CD14-positive monocyte (primary cell): ENCODE measurements at regions of chr14 and their contacts with region 1.

Region 1: DNA sequence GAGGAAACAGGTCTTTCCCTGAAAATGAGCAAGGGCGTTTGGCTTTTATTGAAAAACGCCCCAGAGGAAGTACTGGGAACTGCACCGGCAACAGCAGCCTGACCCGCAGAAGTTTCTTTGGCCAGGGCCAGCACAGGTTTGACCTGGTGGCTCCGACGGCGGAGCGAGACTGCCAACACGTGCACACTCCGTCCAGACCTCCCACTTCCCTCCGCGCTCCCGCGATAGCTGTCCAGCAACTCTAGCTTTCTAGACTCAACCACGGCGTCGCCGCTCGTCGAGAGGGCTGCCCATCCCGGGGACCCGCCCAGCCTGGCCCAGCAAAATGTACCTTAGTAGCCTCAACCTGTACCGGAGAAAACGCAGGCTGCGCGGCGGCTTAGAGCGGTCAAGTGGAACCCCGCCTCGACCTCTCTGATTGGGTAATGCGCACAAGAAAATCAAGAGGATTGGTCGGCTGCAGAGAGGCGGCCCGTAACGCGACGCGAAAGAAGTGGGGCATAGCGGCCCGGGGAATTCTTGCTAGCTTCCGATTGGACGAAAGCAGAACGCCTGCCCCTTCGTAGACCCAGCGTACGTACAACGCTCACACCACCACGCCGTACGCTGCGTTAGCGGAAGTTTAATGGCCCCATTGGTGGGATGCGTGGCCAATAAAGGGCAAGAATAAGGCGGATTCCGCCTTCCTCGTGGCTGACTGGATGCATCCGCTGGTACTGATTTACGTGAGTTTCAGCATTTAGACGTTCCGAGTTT is at the start of gene WDR89:
- DNase-seq: peak; percentile 99
- H3K4me3 ChIP-seq: peak within 1 kb of the TSS; percentile 58 to 88 (median 70)
- H3K4me3 Mint-ChIP-seq: peak within 1 kb of the TSS; percentile 96 to 99
- H3K27ac ChIP-seq: peak within 1 kb of the TSS; percentile 95 to 97
- H3K27ac Mint-ChIP-seq: peak within 1 kb of the TSS; percentile 99 to 100 (median 100)
- H3K4me1 ChIP-seq: peaks cover 12 to 23% of the 10 kb centered on the region in 2 donors
- H3K4me1 Mint-ChIP-seq: peaks cover 5% of the 10 kb centered on the region
- H3K27me3 ChIP-seq: no peaks in the 10 kb centered on the region
- H3K27me3 Mint-ChIP-seq: peaks cover 0 to 2% (median 0%) of the 10 kb centered on the region in 3 donors
- CTCF ChIP-seq: peak; percentile 81
- polyA plus RNA-seq, gene WDR89: 2.1 to 3.6 (median 2.2) TPM

Region 2: GRCh38 chr14:63342371-63342770 is 299.3 kb before region 1 on chr14:
- intact Hi-C with region 1: no loop called
- DNase-seq: no peak
- H3K4me3 ChIP-seq: no peak overlapping the region
- H3K4me3 Mint-ChIP-seq: no peak overlapping the region
- H3K27ac ChIP-seq: no peak overlapping the region
- H3K27ac Mint-ChIP-seq: no peak overlapping the region
- H3K4me1 ChIP-seq: no peaks in the 10 kb centered on the region
- H3K4me1 Mint-ChIP-seq: no peaks in the 10 kb centered on the region
- H3K27me3 ChIP-seq: no peaks in the 10 kb centered on the region
- H3K27me3 Mint-ChIP-seq: peaks cover 2 to 4% (median 3%) of the 10 kb centered on the region in 3 donors
- CTCF ChIP-seq: no peak

Region 3: DNA sequence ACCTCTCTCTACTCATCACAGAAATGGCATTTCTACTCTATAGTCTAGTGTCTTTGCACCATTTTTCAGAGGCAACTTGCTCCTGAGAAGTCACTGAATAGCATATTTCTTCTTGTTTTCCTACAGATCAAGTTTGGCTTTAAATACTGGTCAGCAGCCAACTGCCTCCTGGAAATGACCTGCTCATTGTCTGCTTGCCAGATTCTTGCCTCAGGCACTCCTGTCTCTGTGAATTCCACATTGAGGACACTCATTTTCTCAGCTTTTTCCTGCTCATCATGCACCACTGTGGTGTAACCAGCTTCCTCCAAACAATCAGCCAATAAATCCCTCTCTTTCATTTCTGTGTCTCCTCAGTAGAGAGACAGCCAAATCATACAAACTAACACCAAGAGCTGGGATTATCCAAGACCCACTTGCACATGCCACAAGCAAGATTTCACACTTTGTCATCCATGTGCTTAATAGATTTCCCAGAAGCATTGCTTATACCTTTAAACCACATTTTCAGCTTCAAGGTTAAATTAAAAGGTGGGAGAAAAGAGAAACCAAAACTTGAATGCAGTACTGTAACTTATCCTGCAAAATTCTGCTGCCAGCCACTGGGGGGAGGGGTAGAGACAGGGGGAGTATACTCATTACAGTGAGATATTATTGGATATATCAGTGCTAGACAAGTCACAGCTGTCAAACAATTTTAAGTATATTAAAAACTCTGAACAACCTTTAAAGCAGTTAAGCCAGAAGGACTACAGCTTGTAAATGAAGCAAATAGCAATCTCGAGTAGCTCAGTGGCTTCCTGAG is 203.5 kb before region 1 on chr14:
- intact Hi-C with region 1: no loop called
- DNase-seq: peak in 2 of 3 donors; percentile 1 to 30
- H3K4me3 ChIP-seq: peak overlapping the region in 2 of 3 experiments; percentile 37 to 51
- H3K4me3 Mint-ChIP-seq: peak overlapping the region; percentile 21 to 47
- H3K27ac ChIP-seq: peak overlapping the region in 1 of 2 donors; percentile 64
- H3K27ac Mint-ChIP-seq: peak overlapping the region; percentile 0 to 83 (median 51)
- H3K4me1 ChIP-seq: peaks cover 0 to 6% of the 10 kb centered on the region in 2 donors
- H3K4me1 Mint-ChIP-seq: peaks cover 37% of the 10 kb centered on the region
- H3K27me3 ChIP-seq: no peaks in the 10 kb centered on the region
- H3K27me3 Mint-ChIP-seq: no peaks in the 10 kb centered on the region
- CTCF ChIP-seq: peak; percentile 28

Region 4: DNA sequence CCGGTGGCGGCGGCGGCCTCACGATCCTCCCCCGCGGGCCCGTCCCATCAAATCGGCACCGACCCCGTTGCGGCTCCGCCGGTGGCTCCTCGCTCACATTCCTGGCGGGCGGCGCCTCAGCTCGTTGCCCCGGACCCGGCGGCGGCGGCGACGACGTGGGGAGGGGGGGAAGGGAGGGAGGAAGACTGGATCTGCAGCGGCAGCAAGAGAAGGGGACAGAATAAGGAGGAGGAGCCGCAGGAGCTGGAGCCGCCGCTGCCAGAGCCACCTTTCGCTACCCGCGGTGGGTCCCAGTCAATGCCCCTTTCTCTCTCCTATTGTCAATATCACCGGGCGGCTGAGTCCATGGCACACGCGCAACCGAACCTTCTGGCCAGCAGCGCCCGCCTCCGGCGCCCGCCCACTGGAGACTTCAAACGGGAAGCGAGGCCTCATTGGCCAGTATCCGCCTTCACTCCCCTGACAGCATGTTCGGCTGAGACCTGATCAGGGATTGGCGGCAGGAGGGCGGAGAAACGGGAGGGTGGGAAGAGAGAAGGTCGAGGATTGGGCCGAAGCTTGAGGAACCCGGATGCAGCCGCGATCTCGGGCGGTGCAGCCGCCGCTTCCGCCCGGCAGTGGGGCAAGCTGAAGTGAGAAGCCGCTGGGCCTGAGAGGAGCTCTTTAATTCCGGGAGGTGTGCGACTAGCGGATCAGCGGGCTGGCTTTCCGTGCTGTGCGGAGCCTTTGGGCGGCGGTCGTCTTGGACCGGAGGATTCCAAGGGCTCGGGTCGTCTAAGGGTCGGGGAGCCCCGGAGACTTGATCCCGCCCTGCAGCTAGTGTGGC is 98.4 kb before region 1 on chr14 and contains the start of gene PPP2R5E:
- intact Hi-C with region 1: loop called (anchors 1 to 5 kb)
- DNase-seq: peak; percentile 96 to 98 (median 97)
- H3K4me3 ChIP-seq: peak within 1 kb of the TSS; percentile 86 to 99 (median 90)
- H3K4me3 Mint-ChIP-seq: peak within 1 kb of the TSS; percentile 92 to 94
- H3K27ac ChIP-seq: peak within 1 kb of the TSS; percentile 76 to 96
- H3K27ac Mint-ChIP-seq: peak within 1 kb of the TSS; percentile 89 to 95 (median 92)
- H3K4me1 ChIP-seq: peaks cover 12 to 26% of the 10 kb centered on the region in 2 donors
- H3K4me1 Mint-ChIP-seq: peaks cover 28% of the 10 kb centered on the region
- H3K27me3 ChIP-seq: no peaks in the 10 kb centered on the region
- H3K27me3 Mint-ChIP-seq: peaks cover 0 to 4% (median 2%) of the 10 kb centered on the region in 3 donors
- CTCF ChIP-seq: no peak
- polyA plus RNA-seq, gene PPP2R5E: 8.9 to 26.3 (median 15.1) TPM

Region 5: DNA sequence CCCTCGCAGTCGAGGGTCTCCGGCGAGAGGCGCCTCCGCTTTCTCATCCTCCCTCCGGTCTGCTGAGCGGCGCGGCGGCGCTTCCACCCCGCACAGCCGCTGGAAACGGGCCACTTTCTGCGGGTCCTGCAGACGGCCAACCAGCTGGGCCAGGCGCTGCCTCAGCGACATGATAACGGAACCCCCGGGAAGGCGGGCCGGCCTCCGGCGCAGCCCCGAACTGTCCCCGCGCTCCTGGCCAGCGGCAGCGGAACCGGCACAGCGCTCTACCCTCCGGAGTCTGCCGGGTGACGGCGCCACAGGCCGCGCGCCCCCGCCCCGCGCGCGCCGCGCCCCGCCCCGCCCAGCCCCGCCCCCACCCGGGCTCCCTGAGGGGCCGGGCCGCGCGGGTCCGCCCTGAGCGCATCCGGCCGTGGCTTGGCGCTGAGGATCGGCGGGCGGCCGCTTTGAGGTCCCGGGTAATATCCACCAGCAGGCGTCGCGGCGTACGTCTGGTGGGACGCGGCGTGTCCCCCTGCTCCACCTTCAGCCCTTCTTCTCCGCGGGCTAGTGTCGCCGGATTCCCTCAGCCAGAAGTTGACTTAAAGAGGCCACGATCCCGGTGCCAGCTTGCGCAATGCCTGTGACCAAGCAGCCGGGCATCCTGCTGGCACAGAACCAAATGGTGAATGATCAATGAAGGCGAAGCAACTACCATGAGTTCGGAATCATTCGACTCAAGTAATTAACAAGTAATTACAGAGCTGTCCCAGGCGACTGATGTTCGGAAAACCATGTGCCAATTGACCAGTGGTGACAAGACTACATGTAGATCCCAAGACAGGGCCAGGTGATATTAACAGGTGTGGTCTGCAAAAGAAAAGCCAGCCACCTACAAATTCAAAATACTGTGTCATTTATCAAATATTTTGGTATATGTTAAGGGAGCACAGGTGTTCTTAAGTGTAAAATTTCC is 86.4 kb after region 1 on chr14 and contains the start of gene SGPP1:
- intact Hi-C with region 1: loop called in 1 of 2 experiments (anchors 5 kb)
- DNase-seq: peak; percentile 56 to 75 (median 67)
- H3K4me3 ChIP-seq: peak within 1 kb of the TSS; percentile 78 to 91 (median 85)
- H3K4me3 Mint-ChIP-seq: peak within 1 kb of the TSS; percentile 99 to 100
- H3K27ac ChIP-seq: peak within 1 kb of the TSS; percentile 20 to 70
- H3K27ac Mint-ChIP-seq: peak within 1 kb of the TSS; percentile 69 to 90 (median 85)
- H3K4me1 ChIP-seq: peaks cover 13 to 23% of the 10 kb centered on the region in 2 donors
- H3K4me1 Mint-ChIP-seq: peaks cover 27% of the 10 kb centered on the region
- H3K27me3 ChIP-seq: peaks cover 2 to 18% of the 10 kb centered on the region in 2 donors
- H3K27me3 Mint-ChIP-seq: peaks cover 20 to 46% (median 22%) of the 10 kb centered on the region in 3 donors
- CTCF ChIP-seq: peak; percentile 19
- polyA plus RNA-seq, gene SGPP1: 3.3 to 13.3 (median 7.6) TPM